ENCODE measurements at regions of chr1 and their contacts with region 1.

Region 1: GRCh38 chr1:231357831-231358354 is 19.8 kb downstream of the SPRTN start:
- DNase-seq: peak in 2 of 10 donors; percentile 20 to 36
- H3K4me3 ChIP-seq: peak overlapping the region in 1 of 59 donors; percentile 8
- H3K27ac ChIP-seq: peak overlapping the region in 1 of 59 donors; percentile 32
- H3K27me3 ChIP-seq: no peaks in the 10 kb centered on the region
- CTCF ChIP-seq: peak; percentile 72 to 98 (median 86)

Region 2: GRCh38 chr1:231232870-231233734 is 124.8 kb before region 1 on chr1:
- intact Hi-C with region 1: no loop called
- DNase-seq: no peak
- H3K4me3 ChIP-seq: no peak overlapping the region
- H3K27ac ChIP-seq: no peak overlapping the region
- H3K27me3 ChIP-seq: no peaks in the 10 kb centered on the region
- CTCF ChIP-seq: no peak

Region 3: GRCh38 chr1:231528172-231529029 is 170.5 kb after region 1 on chr1 and contains the start of gene TSNAX:
- intact Hi-C with region 1: loop called in 1 of 2 experiments (anchors 10 kb)
- DNase-seq: peak; percentile 81 to 93 (median 88)
- H3K4me3 ChIP-seq: peak within 1 kb of the TSS; percentile 69 to 99 (median 89)
- H3K27ac ChIP-seq: peak within 1 kb of the TSS; percentile 80 to 99 (median 94)
- H3K27me3 ChIP-seq: no peaks in the 10 kb centered on the region
- CTCF ChIP-seq: peak in 26 of 56 donors; percentile 6 to 50 (median 26)
- total RNA-seq, gene TSNAX: 23.6 to 70.4 (median 49.5) TPM

Region 4: GRCh38 chr1:231584921-231585320 is 227.0 kb after region 1 on chr1:
- intact Hi-C with region 1: loop called (anchors 5 kb)
- DNase-seq: no peak
- H3K4me3 ChIP-seq: no peak overlapping the region
- H3K27ac ChIP-seq: no peak overlapping the region
- H3K27me3 ChIP-seq: no peaks in the 10 kb centered on the region
- CTCF ChIP-seq: no peak

Region 5: GRCh38 chr1:231590453-231591198 is 232.7 kb after region 1 on chr1:
- intact Hi-C with region 1: loop called (anchors 5 kb)
- DNase-seq: peak in 7 of 10 donors; percentile 17 to 59 (median 54)
- H3K4me3 ChIP-seq: no peak overlapping the region
- H3K27ac ChIP-seq: no peak overlapping the region
- H3K27me3 ChIP-seq: no peaks in the 10 kb centered on the region
- CTCF ChIP-seq: peak; percentile 46 to 85 (median 72)

Region 6: GRCh38 chr1:231603598-231604275 is 245.8 kb after region 1 on chr1:
- intact Hi-C with region 1: loop called in 1 of 2 experiments (anchors 5 kb)
- DNase-seq: peak in 3 of 10 donors; percentile 17 to 26 (median 22)
- H3K4me3 ChIP-seq: peak overlapping the region; percentile 21 to 72 (median 52)
- H3K27ac ChIP-seq: peak overlapping the region in 11 of 59 donors; percentile 12 to 58 (median 39)
- H3K27me3 ChIP-seq: no peaks in the 10 kb centered on the region
- CTCF ChIP-seq: peak; percentile 63 to 98 (median 86)

Measured in dorsolateral prefrontal cortex (tissue), 120 donors.